Transverse colon (tissue), 4 donors: ENCODE measurements at regions of chrX and their contacts with region 1.

Region 1: DNA sequence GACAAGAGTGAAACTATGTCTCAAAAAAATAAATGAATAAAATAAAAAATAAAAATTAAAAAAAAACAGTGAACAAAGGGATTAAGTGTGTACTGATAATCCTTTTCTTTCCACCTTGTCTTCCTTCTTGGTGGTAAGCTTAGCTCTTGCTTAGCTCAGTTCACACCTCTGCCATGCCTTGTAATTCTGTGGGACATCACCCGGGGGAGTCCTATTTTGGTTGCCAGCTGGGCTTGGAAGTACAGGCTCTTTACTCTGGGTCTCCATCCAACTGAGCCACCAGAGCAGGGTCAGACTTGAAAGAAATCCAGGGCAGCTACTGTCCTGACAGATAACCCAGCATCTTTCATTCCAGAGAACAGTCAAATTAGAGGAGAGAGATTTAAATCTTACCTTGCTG is 204.2 kb upstream of the TEX13A start:
- DNase-seq: no peak
- H3K4me3 ChIP-seq: no peak overlapping the region
- H3K27ac ChIP-seq: no peak overlapping the region
- H3K4me1 ChIP-seq: no peaks in the 10 kb centered on the region
- H3K27me3 ChIP-seq: no peaks in the 10 kb centered on the region
- CTCF ChIP-seq: no peak
- EP300 ChIP-seq: no peak
- POLR2A ChIP-seq: no peak

Region 2: DNA sequence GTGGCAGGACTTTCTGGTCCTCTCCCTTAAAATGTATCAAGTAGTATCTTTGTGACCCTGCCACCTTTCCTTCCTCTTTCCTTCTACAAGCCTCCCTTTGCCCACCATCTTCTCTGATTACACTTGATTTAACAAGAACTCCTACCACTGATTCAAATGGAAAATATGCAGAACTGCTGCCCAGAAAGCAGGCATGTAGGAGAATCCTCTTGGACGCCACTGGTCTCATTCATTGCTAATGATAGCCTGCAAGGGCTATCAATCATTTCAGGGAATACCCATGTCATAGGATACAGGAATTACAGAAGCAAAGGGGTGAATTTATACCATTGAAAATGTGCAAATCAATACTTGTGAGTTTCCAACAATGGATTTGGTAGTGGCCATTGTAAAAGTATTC is 103.0 kb after region 1 on chrX:
- in situ Hi-C with region 1: loop called in 1 of 4 experiments (anchors 25 kb)
- intact Hi-C with region 1: no loop called
- DNase-seq: no peak
- H3K4me3 ChIP-seq: no peak overlapping the region
- H3K27ac ChIP-seq: no peak overlapping the region
- H3K4me1 ChIP-seq: no peaks in the 10 kb centered on the region
- H3K27me3 ChIP-seq: no peaks in the 10 kb centered on the region
- CTCF ChIP-seq: no peak
- EP300 ChIP-seq: no peak
- POLR2A ChIP-seq: no peak